Naive thymus-derived CD8-positive, alpha-beta T cell (primary cell): ENCODE measurements at regions of chr6 and their contacts with region 1.

Region 1: DNA sequence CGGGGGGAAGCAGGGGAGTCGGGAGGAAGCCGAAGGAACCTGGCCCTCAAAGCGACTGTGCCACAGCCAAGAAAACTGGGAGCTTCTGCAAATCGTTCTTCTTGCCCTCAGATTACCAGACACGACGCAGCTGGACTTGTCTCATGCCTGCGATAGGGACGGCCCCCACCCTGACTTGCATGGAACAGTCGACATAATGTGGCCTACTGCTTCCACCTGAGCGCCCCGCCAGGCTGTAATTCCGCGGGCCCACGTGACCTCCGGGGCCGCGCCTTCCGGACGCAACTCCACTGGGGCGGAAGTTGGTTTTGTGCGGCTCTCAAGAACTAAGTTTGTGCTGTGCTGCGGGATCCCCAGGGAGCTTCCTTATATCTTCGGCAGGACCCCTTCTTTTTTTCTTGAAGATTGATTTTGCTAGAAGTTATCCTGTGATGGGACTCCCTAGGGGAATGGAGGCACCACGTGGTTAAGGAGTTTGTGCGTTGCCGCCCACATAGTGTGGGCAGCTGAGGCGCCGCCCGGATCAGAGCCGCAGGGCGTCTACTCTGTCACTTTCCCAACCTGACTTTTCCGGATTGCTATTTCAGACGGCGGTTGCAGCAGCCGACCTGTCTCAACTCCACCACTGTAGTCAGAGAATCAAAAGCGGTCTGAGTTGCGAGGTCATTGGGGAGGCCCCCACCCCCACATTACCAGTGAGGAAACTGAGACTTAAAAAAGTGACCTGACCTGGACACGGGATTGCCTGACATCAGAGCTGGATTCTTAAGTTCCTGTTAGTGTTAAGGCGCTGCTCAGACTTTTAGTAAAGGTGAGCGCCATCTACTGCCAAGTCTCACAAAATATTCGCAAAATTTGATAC is 540 bp upstream of the CD164 start:
- DNase-seq: peak; percentile 84 to 98 (median 92)
- ATAC-seq: peak; percentile 72 to 73
- H3K4me3 Mint-ChIP-seq: peak overlapping the region; percentile 94 to 99 (median 98)
- H3K27ac Mint-ChIP-seq: peak overlapping the region; percentile 94 to 100 (median 99)
- H3K4me1 Mint-ChIP-seq: peaks cover 18 to 56% (median 45%) of the 10 kb centered on the region in 4 donors
- H3K27me3 Mint-ChIP-seq: no peaks in the 10 kb centered on the region

Region 2: GRCh38 chr6:109095027-109095834 is 287.6 kb before region 1 on chr6 and contains the start of gene CEP57L1:
- POLR2A ChIA-PET with region 1: interaction called, 24 read pairs
- DNase-seq: peak; percentile 88 to 97 (median 94)
- ATAC-seq: peak; percentile 75 to 76
- H3K4me3 Mint-ChIP-seq: peak within 1 kb of the TSS; percentile 88 to 98 (median 94)
- H3K27ac Mint-ChIP-seq: peak within 1 kb of the TSS; percentile 97 to 100 (median 99)
- H3K4me1 Mint-ChIP-seq: peaks cover 24 to 56% (median 51%) of the 10 kb centered on the region in 4 donors
- H3K27me3 Mint-ChIP-seq: no peaks in the 10 kb centered on the region
- polyA plus RNA-seq, gene CEP57L1: 5.4 to 9.5 (median 6.2) TPM

Region 3: GRCh38 chr6:109336221-109336961 is 46.4 kb before region 1 on chr6:
- POLR2A ChIA-PET with region 1: no interaction called
- DNase-seq: no peak
- ATAC-seq: no peak
- H3K4me3 Mint-ChIP-seq: no peak overlapping the region
- H3K27ac Mint-ChIP-seq: no peak overlapping the region
- H3K4me1 Mint-ChIP-seq: peaks cover 0 to 8% (median 5%) of the 10 kb centered on the region in 4 donors
- H3K27me3 Mint-ChIP-seq: no peaks in the 10 kb centered on the region

Region 4: DNA sequence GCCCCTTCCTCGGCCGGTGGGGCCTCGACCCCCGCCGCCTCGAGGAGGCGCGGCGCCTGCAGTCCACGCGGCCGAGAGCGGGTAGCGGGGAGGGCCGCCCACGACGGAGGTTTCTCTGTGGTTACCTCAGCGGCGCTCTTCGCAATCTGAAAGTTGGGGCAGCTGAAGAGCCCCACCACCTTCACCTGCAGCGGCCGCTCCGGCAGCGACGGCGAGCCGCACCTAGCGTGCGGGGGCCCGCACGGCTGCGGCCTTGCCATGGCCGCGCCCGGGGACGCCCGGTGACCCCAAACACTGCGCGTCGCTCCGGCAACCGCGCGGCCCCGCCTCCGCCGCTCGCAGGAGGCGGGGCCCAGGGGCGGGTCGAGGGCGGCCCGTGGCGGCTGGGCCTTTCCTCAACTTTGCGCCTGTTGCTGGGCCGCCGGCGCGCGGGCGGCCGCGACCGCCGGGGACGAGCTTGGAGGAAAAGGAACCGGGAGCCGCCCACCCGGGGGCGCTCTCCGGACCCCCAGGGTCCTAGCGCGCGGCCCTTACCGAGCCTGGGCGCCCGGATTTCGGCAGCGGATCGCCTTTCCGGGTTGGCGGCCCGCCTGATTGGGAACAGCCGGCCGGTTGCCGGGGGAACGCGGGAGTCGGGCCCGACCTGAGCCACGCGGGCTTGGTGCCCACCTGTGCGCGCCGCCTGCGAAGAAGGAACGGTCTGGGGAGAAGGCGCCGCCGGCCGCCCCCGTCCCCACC is 57.7 kb after region 1 on chr6 and contains the starts of genes PPIL6 and SMPD2:
- POLR2A ChIA-PET with region 1: interaction called, 68 read pairs
- DNase-seq: peak; percentile 61 to 86 (median 78)
- ATAC-seq: peak; percentile 78 to 79
- H3K4me3 Mint-ChIP-seq: peak within 1 kb of the TSS; percentile 89 to 97 (median 93)
- H3K27ac Mint-ChIP-seq: peak within 1 kb of the TSS; percentile 78 to 98 (median 96)
- H3K4me1 Mint-ChIP-seq: peaks cover 20 to 32% (median 29%) of the 10 kb centered on the region in 4 donors
- H3K27me3 Mint-ChIP-seq: no peaks in the 10 kb centered on the region
- polyA plus RNA-seq, gene PPIL6: 0.25 to 1.7 (median 0.63) TPM
- polyA plus RNA-seq, gene SMPD2: 5.8 to 8.2 (median 6.7) TPM

Region 5: DNA sequence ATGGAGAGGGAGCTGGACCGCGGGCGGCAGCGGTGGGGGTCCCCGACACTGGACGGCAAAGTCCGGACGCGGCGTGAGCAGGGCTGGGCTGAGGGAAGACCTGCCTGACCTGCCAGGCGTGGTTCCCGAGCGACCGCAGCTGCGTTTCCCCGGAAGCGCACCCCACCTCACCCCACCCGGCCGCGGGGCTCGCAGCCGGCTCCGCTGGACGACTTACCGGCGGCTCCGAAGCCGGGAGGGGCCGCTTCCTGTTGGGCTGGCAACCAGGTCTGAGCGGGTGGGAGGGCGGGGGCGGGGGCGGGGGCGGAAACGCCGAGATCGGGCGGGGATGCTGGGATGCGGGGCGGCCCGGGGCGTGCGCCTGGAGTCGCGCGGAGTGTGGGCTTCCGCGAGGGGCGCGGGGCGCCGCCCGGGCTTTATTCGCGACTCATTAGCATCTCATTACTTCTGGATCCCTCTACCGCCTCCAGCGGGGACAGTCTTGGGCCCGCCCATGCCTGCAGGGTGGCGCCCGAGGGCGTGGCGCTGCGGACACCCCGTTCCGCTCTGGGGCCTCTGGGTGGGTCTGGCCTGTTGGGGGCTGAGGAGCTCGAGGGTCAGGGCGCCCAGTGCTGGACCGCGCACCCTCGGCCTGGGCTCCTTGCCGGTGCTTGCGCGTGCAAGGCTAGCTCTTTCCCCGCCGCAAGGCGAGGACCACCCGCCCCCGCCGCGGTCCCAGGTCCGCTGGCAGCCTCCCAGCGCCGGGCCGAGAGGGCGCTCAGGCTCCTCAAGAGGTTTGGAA is 72.9 kb after region 1 on chr6 and contains the start of gene MICAL1:
- POLR2A ChIA-PET with region 1: interaction called, 56 read pairs
- DNase-seq: peak; percentile 67 to 86 (median 76)
- ATAC-seq: peak; percentile 59 to 70
- H3K4me3 Mint-ChIP-seq: peak within 1 kb of the TSS; percentile 89 to 99 (median 98)
- H3K27ac Mint-ChIP-seq: peak within 1 kb of the TSS; percentile 93 to 100 (median 98)
- H3K4me1 Mint-ChIP-seq: peaks cover 28 to 82% (median 70%) of the 10 kb centered on the region in 4 donors
- H3K27me3 Mint-ChIP-seq: peaks cover 0 to 1% (median 0%) of the 10 kb centered on the region in 5 donors
- polyA plus RNA-seq, gene MICAL1: 8.9 to 13.8 (median 13.2) TPM

Region 6: DNA sequence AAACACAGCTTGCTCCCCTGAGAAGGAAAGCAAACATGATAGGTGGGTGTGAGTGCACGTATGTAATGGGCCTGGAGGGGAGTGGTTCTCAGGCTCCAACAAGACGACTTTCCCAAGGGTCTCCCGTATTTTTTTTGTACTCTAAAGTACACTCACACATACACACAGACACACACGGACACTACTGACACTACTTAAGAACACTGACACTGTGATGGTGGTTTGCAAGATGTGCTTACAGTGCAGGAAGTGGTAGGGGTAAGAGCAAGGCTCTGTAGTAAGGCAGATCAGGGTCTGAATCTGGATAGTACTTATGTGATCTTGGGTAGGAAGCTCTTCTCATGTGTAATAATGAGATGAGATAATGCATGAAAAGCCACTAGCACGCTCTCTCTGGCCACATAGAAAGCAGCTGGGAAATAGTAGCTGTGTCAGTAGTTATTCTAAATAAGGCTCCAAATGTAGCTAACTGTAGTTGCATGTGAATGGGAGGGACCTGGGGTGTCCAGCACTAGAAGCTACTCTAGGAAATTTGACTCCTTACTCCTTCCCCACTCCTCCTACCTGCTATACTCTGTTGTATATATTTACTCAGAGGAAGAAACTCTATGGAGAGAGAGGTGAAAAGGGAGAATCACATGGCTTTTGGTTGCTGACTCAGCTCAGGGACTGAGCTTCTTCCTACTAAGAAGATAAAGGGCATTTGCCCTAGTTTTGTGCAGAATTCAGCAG is 108.6 kb after region 1 on chr6:
- POLR2A ChIA-PET with region 1: interaction called, 15 read pairs
- DNase-seq: peak in 4 of 10 donors; percentile 12 to 61 (median 36)
- ATAC-seq: peak; percentile 97 to 99
- H3K4me3 Mint-ChIP-seq: peak overlapping the region in 9 of 10 donors; percentile 44 to 75 (median 50)
- H3K27ac Mint-ChIP-seq: peak overlapping the region; percentile 20 to 91 (median 73)
- H3K4me1 Mint-ChIP-seq: peaks cover 12 to 28% (median 20%) of the 10 kb centered on the region in 4 donors
- H3K27me3 Mint-ChIP-seq: no peaks in the 10 kb centered on the region

Region 7: GRCh38 chr6:110125361-110125760 is 742.6 kb after region 1 on chr6:
- POLR2A ChIA-PET with region 1: no interaction called
- DNase-seq: no peak
- ATAC-seq: no peak
- H3K4me3 Mint-ChIP-seq: no peak overlapping the region
- H3K27ac Mint-ChIP-seq: no peak overlapping the region
- H3K4me1 Mint-ChIP-seq: peaks cover 0 to 6% (median 0%) of the 10 kb centered on the region in 4 donors
- H3K27me3 Mint-ChIP-seq: no peaks in the 10 kb centered on the region